Adrenal gland (tissue), 19 donors: ENCODE measurements at regions of chr7 and their contacts with region 1.

Region 1: DNA sequence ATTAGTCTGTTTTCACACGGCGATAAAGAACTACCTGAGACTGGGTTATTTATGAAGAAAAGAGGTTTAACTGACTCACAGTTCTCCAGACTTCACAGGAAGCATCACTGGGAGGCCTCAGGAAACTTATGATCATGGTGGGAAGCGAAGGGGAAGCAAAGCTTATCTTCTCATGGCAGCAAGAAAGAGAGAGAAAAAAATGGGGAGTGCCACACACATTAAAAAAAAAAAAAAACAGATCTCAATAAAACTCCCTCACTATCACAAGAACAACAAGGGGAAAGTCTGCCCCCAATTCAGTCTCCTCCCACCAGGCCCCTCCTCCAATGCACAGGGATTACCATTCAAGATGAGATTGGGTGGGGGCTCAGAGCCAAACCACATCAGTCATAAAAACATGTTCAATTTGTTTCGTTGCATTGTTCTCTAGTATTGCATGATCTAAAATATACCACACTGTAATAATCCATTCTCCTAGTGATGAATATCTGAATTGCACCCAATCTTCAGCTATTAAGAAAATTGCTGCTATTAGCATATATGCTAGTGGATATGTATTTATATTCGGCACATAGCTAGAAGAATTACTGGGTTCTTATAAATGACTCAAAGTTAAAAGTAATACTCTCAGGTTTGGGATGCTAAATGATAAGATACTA is 328.9 kb upstream of the KCND2 start:
- DNase-seq: no peak
- H3K4me3 ChIP-seq: no peak overlapping the region
- H3K27ac ChIP-seq: no peak overlapping the region
- H3K4me1 ChIP-seq: no peaks in the 10 kb centered on the region
- H3K27me3 ChIP-seq: no peaks in the 10 kb centered on the region
- CTCF ChIP-seq: no peak
- POLR2A ChIP-seq: no peak

Region 2: GRCh38 chr7:120089968-120090367 is 145.9 kb after region 1 on chr7:
- intact Hi-C with region 1: loop called in 1 of 2 experiments (anchors 10 kb)
- DNase-seq: peak; percentile 20 to 68 (median 55)
- H3K4me3 ChIP-seq: no peak overlapping the region
- H3K27ac ChIP-seq: no peak overlapping the region
- H3K4me1 ChIP-seq: no peaks in the 10 kb centered on the region
- H3K27me3 ChIP-seq: no peaks in the 10 kb centered on the region
- CTCF ChIP-seq: peak in 5 of 6 experiments; percentile 24 to 44 (median 39)
- POLR2A ChIP-seq: no peak